ENCODE measurements at regions of chr18 and their contacts with region 1.

Region 1: DNA sequence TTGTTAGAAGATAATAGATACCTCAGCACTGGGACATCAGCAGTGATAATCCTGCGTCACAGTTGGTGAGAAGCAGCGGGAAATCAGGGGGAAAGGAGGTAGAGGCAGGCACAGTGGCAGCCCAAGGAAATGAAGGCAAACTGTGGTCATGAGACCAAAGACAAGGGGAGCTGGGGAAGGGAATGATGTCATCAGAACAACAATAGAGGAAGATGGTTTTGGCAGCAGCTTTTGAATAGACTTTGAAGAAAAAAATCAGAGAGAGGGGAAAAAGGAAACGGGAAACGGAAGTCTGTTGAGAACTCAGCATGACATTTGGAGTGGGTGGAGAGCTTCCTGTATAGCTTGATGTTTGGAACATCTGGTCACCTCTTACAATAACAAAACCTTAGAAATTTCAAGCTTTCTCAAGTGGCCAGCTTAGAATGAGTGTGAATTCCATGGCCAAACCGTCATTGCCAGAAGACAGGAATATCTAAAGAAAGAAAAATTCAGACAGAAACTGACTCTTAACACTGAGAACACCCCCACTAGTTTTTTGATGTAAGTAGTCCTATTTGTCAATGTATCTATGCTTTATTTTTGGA is 18.4 kb upstream of the YES1 start:
- DNase-seq: peak in 1 of 2 donors; percentile 33
- H3K4me3 ChIP-seq: no peak overlapping the region
- H3K27ac ChIP-seq: no peak overlapping the region
- H3K4me1 ChIP-seq: peaks cover 0 to 5% (median 0%) of the 10 kb centered on the region in 4 donors
- H3K27me3 ChIP-seq: peaks cover 0 to 15% of the 10 kb centered on the region in 2 donors
- CTCF ChIP-seq: no peak

Region 2: DNA sequence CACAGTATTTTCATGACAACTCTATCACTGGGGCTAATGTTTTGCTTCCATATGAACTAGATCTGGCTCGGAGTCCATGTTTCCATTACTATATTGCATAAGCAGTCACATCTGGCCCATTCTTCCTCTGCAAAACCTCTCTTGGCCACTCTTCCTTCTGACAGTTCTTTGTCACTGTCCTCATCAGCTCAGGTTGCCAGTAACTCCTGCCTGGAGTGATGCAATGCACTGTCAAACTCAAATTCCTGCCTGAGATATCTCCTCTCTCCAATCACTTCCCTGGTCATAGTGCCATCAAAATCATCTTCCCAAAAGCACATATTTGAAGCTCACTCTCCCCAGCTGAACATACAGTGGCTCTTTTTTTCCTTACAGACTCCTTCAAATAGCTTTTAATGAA is 396.0 kb before region 1 on chr18:
- intact Hi-C with region 1: no loop called
- DNase-seq: no peak
- H3K4me3 ChIP-seq: no peak overlapping the region
- H3K27ac ChIP-seq: no peak overlapping the region
- H3K4me1 ChIP-seq: no peaks in the 10 kb centered on the region
- H3K27me3 ChIP-seq: no peaks in the 10 kb centered on the region
- CTCF ChIP-seq: no peak

Region 3: GRCh38 chr18:741931-742512 is 88.4 kb before region 1 on chr18:
- intact Hi-C with region 1: loop called (anchors 2 kb)
- DNase-seq: no peak
- H3K4me3 ChIP-seq: no peak overlapping the region
- H3K27ac ChIP-seq: no peak overlapping the region
- H3K4me1 ChIP-seq: no peaks in the 10 kb centered on the region
- H3K27me3 ChIP-seq: no peaks in the 10 kb centered on the region
- CTCF ChIP-seq: peak; percentile 67 to 75

Region 4: DNA sequence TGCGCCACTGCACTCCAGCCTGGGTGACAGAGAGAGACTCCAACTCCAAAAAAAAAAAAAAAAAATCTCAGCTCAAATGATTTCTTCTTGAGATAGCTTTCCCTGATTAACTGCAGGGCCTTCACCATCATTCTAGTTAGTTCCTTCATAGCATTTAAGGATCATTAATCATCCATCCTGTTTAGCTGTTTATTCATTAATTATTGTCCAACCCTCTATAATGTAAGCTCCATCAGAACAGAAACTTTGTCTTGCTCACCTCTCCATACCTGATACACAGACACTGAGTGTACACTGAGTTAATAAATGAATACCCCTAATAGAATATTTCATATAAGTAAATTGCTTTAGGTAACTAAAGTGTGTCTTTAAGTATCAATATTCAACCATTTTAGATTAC is 75.7 kb before region 1 on chr18:
- intact Hi-C with region 1: no loop called
- DNase-seq: no peak
- H3K4me3 ChIP-seq: no peak overlapping the region
- H3K27ac ChIP-seq: no peak overlapping the region
- H3K4me1 ChIP-seq: peaks cover 0 to 12% (median 3%) of the 10 kb centered on the region in 4 donors
- H3K27me3 ChIP-seq: no peaks in the 10 kb centered on the region
- CTCF ChIP-seq: no peak

Measured in tibial artery (tissue), 4 donors.